ENCODE measurements at regions of chr12 and their contacts with region 1.

Region 1: GRCh38 chr12:124321040-124321481 is 26.2 kb downstream of the RFLNA start:
- DNase-seq: peak; percentile 49 to 82 (median 72)
- H3K4me3 ChIP-seq: no peak overlapping the region
- H3K27ac ChIP-seq: no peak overlapping the region
- H3K4me1 ChIP-seq: no peaks in the 10 kb centered on the region
- H3K27me3 ChIP-seq: no peaks in the 10 kb centered on the region
- CTCF ChIP-seq: peak; percentile 58 to 86 (median 85)
- EP300 ChIP-seq: no peak
- POLR2A ChIP-seq: no peak

Region 2: DNA sequence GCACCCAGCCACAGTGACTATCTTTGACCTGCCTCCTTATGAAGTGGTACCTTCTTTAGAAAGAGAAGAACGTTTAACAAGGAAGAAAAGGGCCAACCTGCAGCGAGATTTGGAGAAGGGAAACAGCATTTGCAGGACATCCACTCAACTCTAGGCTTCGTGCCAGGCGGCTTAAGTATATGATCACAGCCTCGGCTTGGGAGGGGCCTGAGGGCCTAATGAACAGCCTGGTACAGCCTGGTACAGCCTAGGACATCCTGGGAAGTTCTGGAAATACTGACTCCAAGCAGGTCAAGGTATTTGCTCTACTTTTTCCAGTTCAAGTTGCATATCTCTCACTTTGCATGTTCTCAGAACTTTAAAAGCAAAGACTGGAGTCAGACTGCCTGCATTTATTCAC is 1634.0 kb before region 1 on chr12:
- intact Hi-C with region 1: no loop called
- DNase-seq: no peak
- H3K4me3 ChIP-seq: no peak overlapping the region
- H3K27ac ChIP-seq: no peak overlapping the region
- H3K4me1 ChIP-seq: no peaks in the 10 kb centered on the region
- H3K27me3 ChIP-seq: no peaks in the 10 kb centered on the region
- CTCF ChIP-seq: no peak
- EP300 ChIP-seq: no peak
- POLR2A ChIP-seq: no peak

Region 3: GRCh38 chr12:124053851-124054250 is 267.2 kb before region 1 on chr12:
- intact Hi-C with region 1: loop called (anchors 2 to 10 kb)
- DNase-seq: peak; percentile 73 to 79 (median 78)
- H3K4me3 ChIP-seq: no peak overlapping the region
- H3K27ac ChIP-seq: no peak overlapping the region
- H3K4me1 ChIP-seq: no peaks in the 10 kb centered on the region
- H3K27me3 ChIP-seq: no peaks in the 10 kb centered on the region
- CTCF ChIP-seq: peak; percentile 39 to 81 (median 78)
- EP300 ChIP-seq: no peak
- POLR2A ChIP-seq: no peak

Measured in ovary (tissue), 10 donors.